ENCODE measurements at regions of chr20 and their contacts with region 1.

Region 1: GRCh38 chr20:407133-407952 is 756 bp upstream of the RBCK1 start:
- DNase-seq: peak; percentile 52 to 63 (median 54)
- H3K4me3 ChIP-seq: peak overlapping the region; percentile 7 to 99 (median 67)
- H3K4me3 Mint-ChIP-seq: peak overlapping the region; percentile 80 to 91
- H3K27ac ChIP-seq: no peak overlapping the region
- H3K27ac Mint-ChIP-seq: peak overlapping the region; percentile 57 to 88 (median 73)
- H3K4me1 ChIP-seq: peaks cover 21 to 26% of the 10 kb centered on the region in 2 donors
- H3K4me1 Mint-ChIP-seq: peaks cover 30% of the 10 kb centered on the region
- H3K27me3 ChIP-seq: no peaks in the 10 kb centered on the region
- H3K27me3 Mint-ChIP-seq: peaks cover 1 to 4% (median 3%) of the 10 kb centered on the region in 3 donors
- CTCF ChIP-seq: peak; percentile 17

Region 2: GRCh38 chr20:208942-209566 is 198.3 kb before region 1 on chr20:
- intact Hi-C with region 1: no loop called
- DNase-seq: peak; percentile 35 to 56 (median 52)
- H3K4me3 ChIP-seq: no peak overlapping the region
- H3K4me3 Mint-ChIP-seq: no peak overlapping the region
- H3K27ac ChIP-seq: no peak overlapping the region
- H3K27ac Mint-ChIP-seq: no peak overlapping the region
- H3K4me1 ChIP-seq: no peaks in the 10 kb centered on the region
- H3K4me1 Mint-ChIP-seq: no peaks in the 10 kb centered on the region
- H3K27me3 ChIP-seq: no peaks in the 10 kb centered on the region
- H3K27me3 Mint-ChIP-seq: peaks cover 0 to 2% (median 0%) of the 10 kb centered on the region in 3 donors
- CTCF ChIP-seq: peak; percentile 77

Region 3: DNA sequence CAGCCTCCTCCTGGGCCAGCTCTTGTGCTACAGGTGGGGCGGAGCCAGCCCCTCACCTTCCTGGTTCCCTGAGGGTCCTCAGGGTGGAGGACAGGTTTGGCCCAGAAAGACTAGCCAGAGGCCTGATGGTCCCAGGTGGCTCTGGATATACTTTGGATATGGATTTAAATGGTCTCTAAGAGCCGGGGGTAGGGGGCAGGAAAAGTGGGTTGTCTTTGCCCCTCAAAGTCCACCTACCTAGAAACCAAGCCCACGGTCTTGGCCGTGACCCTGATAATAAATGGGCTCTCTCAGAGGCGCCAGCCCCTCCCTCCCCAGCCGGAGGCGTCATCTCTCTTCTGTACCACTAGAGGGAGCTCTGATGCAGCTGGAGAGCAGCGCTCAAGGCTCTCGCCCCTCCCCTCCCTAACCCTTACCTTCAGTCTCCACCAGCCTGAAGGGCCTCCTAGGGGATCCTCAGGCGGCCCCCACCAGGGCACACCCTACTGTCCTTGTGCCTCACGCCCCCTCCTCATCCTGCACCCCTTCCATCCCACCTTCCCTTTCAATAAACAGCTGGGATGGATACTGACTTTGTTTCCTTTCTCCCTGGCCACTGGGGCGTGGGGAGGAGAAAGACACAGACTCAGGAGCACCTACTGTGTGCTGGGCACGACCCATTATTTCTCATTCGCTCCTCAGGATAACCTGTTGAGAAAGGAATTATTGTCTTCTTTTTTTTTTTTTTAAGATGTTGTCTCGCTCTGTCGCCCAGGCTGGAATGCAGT is 52.9 kb before region 1 on chr20:
- intact Hi-C with region 1: loop called (anchors 2 to 10 kb)
- DNase-seq: peak; percentile 80 to 83 (median 81)
- H3K4me3 ChIP-seq: no peak overlapping the region
- H3K4me3 Mint-ChIP-seq: no peak overlapping the region
- H3K27ac ChIP-seq: no peak overlapping the region
- H3K27ac Mint-ChIP-seq: peak overlapping the region in 1 of 7 donors; percentile 18
- H3K4me1 ChIP-seq: no peaks in the 10 kb centered on the region
- H3K4me1 Mint-ChIP-seq: peaks cover 3% of the 10 kb centered on the region
- H3K27me3 ChIP-seq: no peaks in the 10 kb centered on the region
- H3K27me3 Mint-ChIP-seq: peaks cover 0 to 7% (median 2%) of the 10 kb centered on the region in 3 donors
- CTCF ChIP-seq: peak; percentile 92

Region 4: DNA sequence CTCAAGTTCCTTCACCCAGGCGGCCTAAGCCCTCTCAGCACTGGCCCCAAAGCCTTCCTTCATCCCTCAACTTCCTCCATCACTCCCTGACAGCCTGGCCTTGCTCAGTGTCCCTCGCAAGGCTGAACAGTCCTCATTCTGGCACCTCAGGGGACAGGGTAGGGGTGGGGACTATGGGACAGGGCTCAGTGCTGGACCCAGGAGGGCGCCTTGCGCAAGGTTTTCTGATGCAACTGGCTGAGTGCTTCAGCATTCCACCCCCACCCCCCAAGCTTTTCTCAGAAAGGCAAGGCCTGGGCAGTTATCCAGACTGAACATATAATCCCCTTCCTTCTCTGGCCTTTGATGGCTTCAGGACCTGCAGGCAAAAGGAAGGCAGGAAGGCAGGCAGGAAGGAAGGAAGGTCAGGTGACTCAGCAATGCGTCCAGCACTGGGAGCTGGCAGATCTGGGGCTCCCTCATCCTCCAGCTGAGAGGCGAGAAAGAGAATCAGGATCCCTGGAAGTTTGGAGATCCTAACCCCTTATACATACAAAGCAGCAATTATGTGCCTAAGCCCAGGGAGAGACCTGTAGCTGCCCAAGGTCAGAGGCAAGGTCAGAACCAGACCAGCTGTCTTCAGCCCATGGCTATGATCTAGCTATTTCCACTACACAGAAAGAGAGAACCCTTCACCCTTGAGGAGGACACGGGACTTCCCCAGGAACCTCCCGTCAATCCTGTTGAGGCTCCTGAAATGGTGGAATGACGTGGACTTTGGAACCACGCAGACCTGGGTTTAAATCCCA is 35.4 kb before region 1 on chr20:
- intact Hi-C with region 1: loop called in 1 of 2 experiments (anchors 5 kb)
- DNase-seq: peak; percentile 77 to 91 (median 86)
- H3K4me3 ChIP-seq: no peak overlapping the region
- H3K4me3 Mint-ChIP-seq: peak overlapping the region in 1 of 2 donors; percentile 55
- H3K27ac ChIP-seq: peak overlapping the region; percentile 71 to 97
- H3K27ac Mint-ChIP-seq: peak overlapping the region; percentile 90 to 97 (median 94)
- H3K4me1 ChIP-seq: peaks cover 31 to 40% of the 10 kb centered on the region in 2 donors
- H3K4me1 Mint-ChIP-seq: peaks cover 36% of the 10 kb centered on the region
- H3K27me3 ChIP-seq: no peaks in the 10 kb centered on the region
- H3K27me3 Mint-ChIP-seq: peaks cover 1 to 10% (median 2%) of the 10 kb centered on the region in 3 donors
- CTCF ChIP-seq: no peak

Region 5: GRCh38 chr20:462199-462991 is 55.1 kb after region 1 on chr20 and contains the start of gene TBC1D20:
- intact Hi-C with region 1: loop called (anchors 5 kb)
- DNase-seq: peak; percentile 74 to 85 (median 81)
- H3K4me3 ChIP-seq: peak within 1 kb of the TSS; percentile 79 to 94 (median 90)
- H3K4me3 Mint-ChIP-seq: peak within 1 kb of the TSS; percentile 93 to 98
- H3K27ac ChIP-seq: peak within 1 kb of the TSS; percentile 55 to 76
- H3K27ac Mint-ChIP-seq: peak within 1 kb of the TSS; percentile 78 to 91 (median 86)
- H3K4me1 ChIP-seq: peaks cover 22 to 27% of the 10 kb centered on the region in 2 donors
- H3K4me1 Mint-ChIP-seq: peaks cover 32% of the 10 kb centered on the region
- H3K27me3 ChIP-seq: no peaks in the 10 kb centered on the region
- H3K27me3 Mint-ChIP-seq: peaks cover 0 to 6% (median 5%) of the 10 kb centered on the region in 3 donors
- CTCF ChIP-seq: no peak
- polyA plus RNA-seq, gene TBC1D20: 10.5 to 24.7 (median 11.3) TPM

Region 6: GRCh38 chr20:621125-621756 is 213.9 kb after region 1 on chr20:
- intact Hi-C with region 1: no loop called
- DNase-seq: no peak
- H3K4me3 ChIP-seq: no peak overlapping the region
- H3K4me3 Mint-ChIP-seq: no peak overlapping the region
- H3K27ac ChIP-seq: no peak overlapping the region
- H3K27ac Mint-ChIP-seq: no peak overlapping the region
- H3K4me1 ChIP-seq: no peaks in the 10 kb centered on the region
- H3K4me1 Mint-ChIP-seq: peaks cover 3% of the 10 kb centered on the region
- H3K27me3 ChIP-seq: no peaks in the 10 kb centered on the region
- H3K27me3 Mint-ChIP-seq: peaks cover 3 to 7% (median 7%) of the 10 kb centered on the region in 3 donors
- CTCF ChIP-seq: no peak